ENCODE measurements at regions of chr12 and their contacts with region 1.

Region 1: GRCh38 chr12:48851883-48852733 is at the start of gene DDX23:
- DNase-seq: peak; percentile 73 to 93 (median 89)
- ATAC-seq: peak; percentile 98
- H3K4me3 ChIP-seq: peak within 1 kb of the TSS; percentile 96
- H3K4me3 Mint-ChIP-seq: peak within 1 kb of the TSS; percentile 89 to 99 (median 98)
- H3K27ac ChIP-seq: peak within 1 kb of the TSS; percentile 93
- H3K27ac Mint-ChIP-seq: peak within 1 kb of the TSS; percentile 89 to 100 (median 98)
- H3K4me1 ChIP-seq: peaks cover 18 to 24% of the 10 kb centered on the region in 2 donors
- H3K4me1 Mint-ChIP-seq: peaks cover 30 to 49% (median 43%) of the 10 kb centered on the region in 7 donors
- H3K27me3 ChIP-seq: no peaks in the 10 kb centered on the region
- H3K27me3 Mint-ChIP-seq: no peaks in the 10 kb centered on the region
- total RNA-seq, gene DDX23: 84.0 to 160 (median 127) TPM

Region 2: GRCh38 chr12:48482198-48482597 is 369.9 kb before region 1 on chr12 and contains the start of gene C12orf54:
- CTCF ChIA-PET with region 1: no interaction called
- POLR2A ChIA-PET with region 1: no interaction called
- intact Hi-C with region 1: no loop called
- DNase-seq: no peak
- ATAC-seq: no peak
- H3K4me3 ChIP-seq: no peak within 1 kb of the TSS
- H3K4me3 Mint-ChIP-seq: no peak within 1 kb of the TSS
- H3K27ac ChIP-seq: no peak within 1 kb of the TSS
- H3K27ac Mint-ChIP-seq: peak within 1 kb of the TSS in 1 of 9 donors; percentile 42
- H3K4me1 ChIP-seq: no peaks in the 10 kb centered on the region
- H3K4me1 Mint-ChIP-seq: peaks cover 0 to 1% (median 0%) of the 10 kb centered on the region in 7 donors
- H3K27me3 ChIP-seq: no peaks in the 10 kb centered on the region
- H3K27me3 Mint-ChIP-seq: peaks cover 6 to 15% (median 7%) of the 10 kb centered on the region in 5 donors
- total RNA-seq, gene C12orf54: not detected

Region 3: DNA sequence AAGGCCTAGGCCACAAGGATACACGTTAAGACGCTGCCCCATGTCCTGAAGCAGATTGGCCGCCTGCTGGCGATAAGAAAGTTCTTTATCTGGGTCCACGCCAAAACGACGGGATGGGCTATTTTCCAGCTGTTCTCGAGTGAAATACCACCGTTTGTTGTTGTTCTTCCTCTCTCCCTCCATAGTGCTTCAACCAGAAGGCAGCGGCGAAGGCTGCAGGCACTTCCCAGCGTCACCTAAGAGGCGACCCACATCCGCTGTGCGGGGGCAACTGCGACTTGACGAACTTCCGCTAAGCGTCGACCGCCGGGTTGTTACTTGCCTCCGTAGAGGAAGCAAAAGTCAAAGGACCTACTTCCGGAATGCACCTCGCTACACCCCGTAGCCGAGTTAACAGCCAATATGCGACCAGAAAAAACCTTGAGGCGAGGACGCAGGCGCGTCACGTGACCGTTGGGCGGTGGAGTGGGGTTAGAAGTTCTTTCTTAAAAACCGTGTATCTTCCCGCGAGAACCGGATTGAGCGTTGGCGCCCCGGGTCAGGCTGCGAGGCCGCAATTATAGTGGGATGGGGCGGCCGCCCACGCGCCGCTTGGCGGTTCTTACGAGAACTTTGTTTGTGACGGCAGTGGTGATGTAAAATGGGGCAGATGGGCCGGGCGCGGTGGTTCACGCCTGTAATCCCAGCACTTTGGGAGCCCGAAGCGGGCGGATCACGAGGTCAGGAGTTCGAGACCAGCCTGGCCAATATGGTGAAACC is 135.4 kb before region 1 on chr12 and contains the start of gene CCNT1:
- CTCF ChIA-PET with region 1: no interaction called
- POLR2A ChIA-PET with region 1: interaction called, 3 read pairs
- intact Hi-C with region 1: loop called (anchors 1 kb)
- DNase-seq: peak; percentile 90 to 100 (median 99)
- ATAC-seq: peak; percentile 93
- H3K4me3 ChIP-seq: peak within 1 kb of the TSS; percentile 88
- H3K4me3 Mint-ChIP-seq: peak within 1 kb of the TSS; percentile 89 to 98 (median 94)
- H3K27ac ChIP-seq: peak within 1 kb of the TSS; percentile 95
- H3K27ac Mint-ChIP-seq: peak within 1 kb of the TSS; percentile 95 to 99 (median 98)
- H3K4me1 ChIP-seq: peaks cover 14 to 24% of the 10 kb centered on the region in 2 donors
- H3K4me1 Mint-ChIP-seq: peaks cover 21 to 50% (median 37%) of the 10 kb centered on the region in 7 donors
- H3K27me3 ChIP-seq: no peaks in the 10 kb centered on the region
- H3K27me3 Mint-ChIP-seq: peaks cover 0 to 4% (median 0%) of the 10 kb centered on the region in 5 donors
- total RNA-seq, gene CCNT1: 62.5 to 127 (median 76.6) TPM

Region 4: DNA sequence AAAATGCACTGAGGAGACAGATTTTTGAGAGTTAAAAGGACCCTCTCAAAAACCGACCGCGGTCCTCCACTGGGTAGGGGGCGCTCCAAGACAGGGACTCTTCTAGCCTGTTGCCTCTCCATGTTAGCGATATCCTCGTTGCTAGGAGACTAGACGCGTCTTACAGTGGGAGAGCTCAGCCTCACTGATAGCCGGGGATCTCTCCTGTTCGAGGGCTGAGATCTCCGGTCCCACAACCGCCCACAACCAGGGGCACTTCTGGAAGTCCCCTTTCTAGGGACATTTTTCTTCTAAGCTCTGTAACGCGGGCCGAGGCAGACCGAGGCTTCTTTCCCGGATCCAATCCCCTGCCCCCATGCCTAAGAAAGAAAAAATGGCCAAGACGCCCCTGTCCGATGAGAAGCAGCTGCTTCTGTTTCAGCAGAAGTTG is 51.9 kb after region 1 on chr12:
- CTCF ChIA-PET with region 1: interaction called, 15 read pairs
- POLR2A ChIA-PET with region 1: interaction called, 8 read pairs
- intact Hi-C with region 1: loop called (anchors 1 kb)
- DNase-seq: peak; percentile 64 to 89 (median 83)
- ATAC-seq: peak; percentile 100
- H3K4me3 ChIP-seq: peak overlapping the region; percentile 60
- H3K4me3 Mint-ChIP-seq: peak overlapping the region; percentile 48 to 81 (median 78)
- H3K27ac ChIP-seq: no peak overlapping the region
- H3K27ac Mint-ChIP-seq: peak overlapping the region in 5 of 9 donors; percentile 32 to 84 (median 57)
- H3K4me1 ChIP-seq: peaks cover 0 to 9% of the 10 kb centered on the region in 2 donors
- H3K4me1 Mint-ChIP-seq: peaks cover 0 to 11% (median 8%) of the 10 kb centered on the region in 7 donors
- H3K27me3 ChIP-seq: no peaks in the 10 kb centered on the region
- H3K27me3 Mint-ChIP-seq: peaks cover 0 to 7% (median 0%) of the 10 kb centered on the region in 5 donors

Region 5: DNA sequence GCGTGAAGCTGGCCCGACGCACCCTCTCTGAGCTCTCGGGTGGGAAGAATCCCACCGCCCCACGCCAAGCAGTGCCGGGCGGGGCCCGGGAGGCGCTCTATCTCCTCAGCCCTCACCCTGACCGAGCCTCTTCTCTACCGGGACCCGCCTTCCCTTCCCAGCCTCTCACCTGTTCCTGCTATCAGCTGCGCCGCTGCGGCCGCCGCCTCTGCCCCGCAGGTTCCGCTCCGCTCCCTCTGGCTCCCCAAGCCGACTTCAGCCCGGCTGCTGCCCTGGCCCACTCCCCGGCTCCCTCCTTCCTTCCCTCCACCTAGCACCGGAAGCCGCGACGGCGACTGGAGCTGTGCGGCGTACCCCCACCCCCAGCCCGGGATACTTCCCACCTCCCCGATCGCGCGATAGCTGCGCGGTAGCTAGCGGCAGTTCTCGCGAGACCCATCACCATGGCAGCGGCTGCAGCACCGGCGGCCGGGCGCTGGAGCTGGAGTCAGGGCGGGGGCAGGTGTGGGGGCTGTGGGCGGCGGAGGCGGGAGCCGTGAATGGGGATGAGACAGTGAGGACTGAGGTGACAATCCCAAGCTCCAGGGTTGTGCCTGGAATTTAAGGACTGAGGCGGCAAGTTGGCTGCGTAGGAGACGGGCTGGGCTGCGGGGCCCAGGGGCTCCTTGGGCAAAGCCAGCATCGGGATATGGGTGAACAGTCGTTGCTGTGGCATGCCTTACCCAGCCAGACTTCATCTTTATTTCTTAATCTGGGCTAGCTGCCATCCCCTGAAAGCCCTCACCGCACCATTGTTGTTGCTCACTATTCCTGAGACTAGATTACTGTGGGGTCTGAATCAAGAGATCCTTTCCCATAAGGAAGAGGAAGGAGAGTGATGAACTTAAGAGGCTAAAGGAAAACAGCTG is 105.3 kb after region 1 on chr12 and contains the start of gene ARF3:
- CTCF ChIA-PET with region 1: interaction called, 9 read pairs
- POLR2A ChIA-PET with region 1: interaction called, 7 read pairs
- intact Hi-C with region 1: loop called (anchors 1 kb)
- DNase-seq: peak; percentile 84 to 92 (median 91)
- ATAC-seq: peak; percentile 96
- H3K4me3 ChIP-seq: peak within 1 kb of the TSS; percentile 86
- H3K4me3 Mint-ChIP-seq: peak within 1 kb of the TSS; percentile 90 to 99 (median 96)
- H3K27ac ChIP-seq: peak within 1 kb of the TSS; percentile 80
- H3K27ac Mint-ChIP-seq: peak within 1 kb of the TSS; percentile 78 to 96 (median 88)
- H3K4me1 ChIP-seq: peaks cover 17 to 22% of the 10 kb centered on the region in 2 donors
- H3K4me1 Mint-ChIP-seq: peaks cover 27 to 55% (median 47%) of the 10 kb centered on the region in 7 donors
- H3K27me3 ChIP-seq: no peaks in the 10 kb centered on the region
- H3K27me3 Mint-ChIP-seq: peaks cover 0 to 29% (median 3%) of the 10 kb centered on the region in 5 donors
- total RNA-seq, gene ARF3: 48.7 to 137 (median 56.1) TPM

Region 6: GRCh38 chr12:49018261-49019119 is 166.4 kb after region 1 on chr12 and contains the start of gene PRKAG1:
- CTCF ChIA-PET with region 1: interaction called, 4 read pairs
- POLR2A ChIA-PET with region 1: no interaction called
- intact Hi-C with region 1: loop called (anchors 1 kb)
- DNase-seq: peak; percentile 93 to 98 (median 97)
- ATAC-seq: peak; percentile 94
- H3K4me3 ChIP-seq: peak within 1 kb of the TSS; percentile 78
- H3K4me3 Mint-ChIP-seq: peak within 1 kb of the TSS; percentile 79 to 98 (median 94)
- H3K27ac ChIP-seq: peak within 1 kb of the TSS; percentile 86
- H3K27ac Mint-ChIP-seq: peak within 1 kb of the TSS; percentile 96 to 100 (median 99)
- H3K4me1 ChIP-seq: peaks cover 16 to 19% of the 10 kb centered on the region in 2 donors
- H3K4me1 Mint-ChIP-seq: peaks cover 23 to 53% (median 45%) of the 10 kb centered on the region in 7 donors
- H3K27me3 ChIP-seq: no peaks in the 10 kb centered on the region
- H3K27me3 Mint-ChIP-seq: no peaks in the 10 kb centered on the region
- total RNA-seq, gene PRKAG1: 34.0 to 74.4 (median 50.6) TPM

Region 7: DNA sequence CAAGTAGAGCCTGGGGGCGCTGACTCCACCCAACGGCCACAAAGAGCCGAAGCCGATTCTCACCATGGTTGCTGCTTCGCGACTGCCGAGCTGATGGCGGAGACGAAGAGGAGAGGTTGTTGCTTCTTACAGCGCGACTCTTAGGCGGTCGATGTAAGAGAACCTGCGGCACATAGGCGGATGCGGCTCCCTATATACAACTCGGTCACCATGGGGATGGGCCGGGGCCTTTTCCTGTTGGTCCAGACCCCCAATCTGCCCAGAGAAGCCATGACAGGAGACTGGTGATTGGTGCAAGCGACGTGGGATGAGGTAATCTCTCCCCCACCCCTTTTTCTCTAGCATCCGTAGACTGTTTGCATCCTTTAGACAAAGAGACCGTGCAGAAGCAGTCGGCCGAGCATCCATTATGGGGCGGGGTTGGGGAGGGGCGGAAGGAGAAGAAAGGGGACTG is 336.8 kb after region 1 on chr12 and contains the start of gene TUBA1A:
- CTCF ChIA-PET with region 1: no interaction called
- POLR2A ChIA-PET with region 1: interaction called, 11 read pairs
- intact Hi-C with region 1: no loop called
- DNase-seq: peak; percentile 80 to 99 (median 98)
- ATAC-seq: peak; percentile 93
- H3K4me3 ChIP-seq: peak within 1 kb of the TSS; percentile 91
- H3K4me3 Mint-ChIP-seq: peak within 1 kb of the TSS; percentile 94 to 99 (median 98)
- H3K27ac ChIP-seq: peak within 1 kb of the TSS; percentile 99
- H3K27ac Mint-ChIP-seq: peak within 1 kb of the TSS; percentile 98 to 100 (median 99)
- H3K4me1 ChIP-seq: peaks cover 7 to 12% of the 10 kb centered on the region in 2 donors
- H3K4me1 Mint-ChIP-seq: peaks cover 11 to 32% (median 26%) of the 10 kb centered on the region in 7 donors
- H3K27me3 ChIP-seq: no peaks in the 10 kb centered on the region
- H3K27me3 Mint-ChIP-seq: peaks cover 0 to 5% (median 0%) of the 10 kb centered on the region in 5 donors
- total RNA-seq, gene TUBA1A: 61.8 to 492 (median 98.8) TPM

Measured in naive thymus-derived CD4-positive, alpha-beta T cell (primary cell).